Naive thymus-derived CD4-positive, alpha-beta T cell (primary cell): ENCODE measurements at regions of chr6 and their contacts with region 1.

Region 1: DNA sequence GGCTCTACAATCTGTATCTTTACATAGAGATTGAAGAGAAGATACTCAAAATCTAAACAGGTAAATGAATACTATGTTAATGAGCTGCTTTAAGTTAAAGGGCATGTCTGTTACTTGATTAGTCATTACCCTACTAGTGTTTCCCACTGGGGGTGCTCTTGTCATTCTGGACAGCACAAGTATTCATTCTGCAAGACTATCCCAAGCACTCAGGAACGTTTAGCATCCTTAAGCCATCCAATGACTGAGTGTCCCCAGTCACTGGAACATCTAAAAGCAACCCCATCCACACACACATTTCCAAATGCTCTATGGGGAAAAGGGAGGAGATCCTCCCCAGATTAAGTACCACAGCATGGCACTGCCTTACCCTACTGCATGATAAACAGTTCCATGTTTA is 25.7 kb downstream of the EZR start:
- DNase-seq: peak in 3 of 9 donors; percentile 29 to 39 (median 36)
- ATAC-seq: peak; percentile 56
- H3K4me3 ChIP-seq: no peak overlapping the region
- H3K4me3 Mint-ChIP-seq: peak overlapping the region in 1 of 10 donors; percentile 29
- H3K27ac ChIP-seq: no peak overlapping the region
- H3K27ac Mint-ChIP-seq: peak overlapping the region in 5 of 9 donors; percentile 25 to 82 (median 79)
- H3K4me1 ChIP-seq: peaks cover 19 to 77% of the 10 kb centered on the region in 2 donors
- H3K4me1 Mint-ChIP-seq: peaks cover 47 to 87% (median 80%) of the 10 kb centered on the region in 7 donors
- H3K27me3 ChIP-seq: no peaks in the 10 kb centered on the region
- H3K27me3 Mint-ChIP-seq: no peaks in the 10 kb centered on the region

Region 2: GRCh38 chr6:158303210-158303731 is 490.2 kb before region 1 on chr6:
- CTCF ChIA-PET with region 1: no interaction called
- POLR2A ChIA-PET with region 1: no interaction called
- intact Hi-C with region 1: no loop called
- DNase-seq: no peak
- ATAC-seq: no peak
- H3K4me3 ChIP-seq: no peak overlapping the region
- H3K4me3 Mint-ChIP-seq: no peak overlapping the region
- H3K27ac ChIP-seq: no peak overlapping the region
- H3K27ac Mint-ChIP-seq: no peak overlapping the region
- H3K4me1 ChIP-seq: no peaks in the 10 kb centered on the region
- H3K4me1 Mint-ChIP-seq: peaks cover 0 to 5% (median 0%) of the 10 kb centered on the region in 7 donors
- H3K27me3 ChIP-seq: no peaks in the 10 kb centered on the region
- H3K27me3 Mint-ChIP-seq: no peaks in the 10 kb centered on the region

Region 3: DNA sequence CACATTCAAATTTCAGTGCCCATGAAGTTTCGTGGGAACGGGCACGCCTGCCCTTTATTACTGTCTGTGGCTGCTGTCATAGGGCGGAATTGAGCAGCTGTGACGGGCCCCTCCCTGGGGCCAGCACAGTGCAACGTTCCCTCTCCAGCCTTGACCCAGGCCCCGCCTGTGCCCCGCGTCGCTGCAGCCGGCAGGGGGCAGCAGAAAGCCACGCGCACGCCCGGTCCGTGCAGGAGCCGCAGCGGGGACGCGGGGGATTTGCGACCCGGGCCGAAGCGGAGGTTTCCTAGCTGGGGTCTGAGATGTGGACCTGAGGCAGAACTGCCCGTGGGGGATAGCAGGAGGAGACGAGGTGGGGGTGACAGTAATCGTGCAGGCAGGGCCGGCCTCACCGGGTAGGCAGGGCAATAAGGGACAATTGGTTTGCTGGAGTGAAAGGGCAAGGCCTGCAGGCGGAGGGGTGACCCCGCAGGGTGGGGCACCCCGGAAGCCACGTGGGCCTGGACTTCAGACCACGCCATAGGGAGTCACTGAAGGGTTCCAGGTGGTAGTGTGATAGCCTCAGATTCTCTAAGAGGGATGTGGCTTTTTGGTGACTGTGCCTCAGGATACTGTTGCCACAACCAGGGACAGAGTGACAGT is 89.1 kb before region 1 on chr6:
- CTCF ChIA-PET with region 1: interaction called, 3 read pairs
- POLR2A ChIA-PET with region 1: no interaction called
- intact Hi-C with region 1: loop called (anchors 1 kb)
- DNase-seq: peak; percentile 55 to 85 (median 74)
- ATAC-seq: peak; percentile 98
- H3K4me3 ChIP-seq: peak overlapping the region; percentile 60
- H3K4me3 Mint-ChIP-seq: peak overlapping the region; percentile 73 to 90 (median 84)
- H3K27ac ChIP-seq: peak overlapping the region; percentile 35
- H3K27ac Mint-ChIP-seq: peak overlapping the region in 8 of 9 donors; percentile 14 to 84 (median 64)
- H3K4me1 ChIP-seq: peaks cover 8 to 9% of the 10 kb centered on the region in 2 donors
- H3K4me1 Mint-ChIP-seq: peaks cover 7 to 27% (median 15%) of the 10 kb centered on the region in 7 donors
- H3K27me3 ChIP-seq: no peaks in the 10 kb centered on the region
- H3K27me3 Mint-ChIP-seq: no peaks in the 10 kb centered on the region

Region 4: DNA sequence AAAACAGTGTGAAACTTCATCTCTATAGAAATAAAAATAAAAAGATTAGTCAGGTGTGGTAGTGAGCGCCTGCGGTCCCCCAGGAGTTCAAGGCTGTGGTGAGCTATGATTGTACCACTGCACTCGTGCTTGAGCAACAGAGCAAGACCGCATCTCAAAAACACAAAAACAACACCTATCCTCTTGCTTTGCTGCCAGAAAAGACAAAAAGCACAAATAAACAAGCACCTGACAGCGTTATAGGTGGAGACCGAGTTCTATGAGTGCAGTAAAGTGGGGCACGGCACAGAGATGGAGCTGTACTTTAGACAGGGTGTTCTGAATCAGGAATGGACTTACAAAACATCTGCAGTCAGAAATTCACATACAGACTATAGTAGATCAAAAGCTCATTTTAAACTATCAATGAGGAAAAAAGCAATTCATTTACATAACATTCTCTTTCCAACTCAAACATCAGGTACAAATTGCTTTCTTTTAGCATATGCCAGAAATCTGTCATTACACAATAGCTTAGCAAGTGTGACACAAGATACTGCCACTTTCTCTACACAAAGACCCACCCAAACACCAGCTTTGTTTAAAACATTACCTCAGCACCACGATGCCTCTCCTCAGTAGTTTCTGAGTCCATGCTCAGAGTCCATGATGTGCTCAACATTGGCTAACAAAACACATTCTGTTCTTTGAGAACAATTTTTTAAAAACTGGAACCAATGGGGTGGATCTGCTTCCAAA is 15.7 kb after region 1 on chr6:
- CTCF ChIA-PET with region 1: interaction called, 10 read pairs
- POLR2A ChIA-PET with region 1: interaction called, 10 read pairs
- intact Hi-C with region 1: loop called in 1 of 2 experiments (anchors 1 kb)
- DNase-seq: peak in 2 of 9 donors; percentile 35
- ATAC-seq: peak; percentile 31
- H3K4me3 ChIP-seq: no peak overlapping the region
- H3K4me3 Mint-ChIP-seq: peak overlapping the region in 9 of 10 donors; percentile 9 to 53 (median 35)
- H3K27ac ChIP-seq: no peak overlapping the region
- H3K27ac Mint-ChIP-seq: peak overlapping the region in 6 of 9 donors; percentile 50 to 79 (median 72)
- H3K4me1 ChIP-seq: peaks cover 78 to 94% of the 10 kb centered on the region in 2 donors
- H3K4me1 Mint-ChIP-seq: peaks cover 63 to 100% (median 97%) of the 10 kb centered on the region in 7 donors
- H3K27me3 ChIP-seq: no peaks in the 10 kb centered on the region
- H3K27me3 Mint-ChIP-seq: no peaks in the 10 kb centered on the region

Region 5: DNA sequence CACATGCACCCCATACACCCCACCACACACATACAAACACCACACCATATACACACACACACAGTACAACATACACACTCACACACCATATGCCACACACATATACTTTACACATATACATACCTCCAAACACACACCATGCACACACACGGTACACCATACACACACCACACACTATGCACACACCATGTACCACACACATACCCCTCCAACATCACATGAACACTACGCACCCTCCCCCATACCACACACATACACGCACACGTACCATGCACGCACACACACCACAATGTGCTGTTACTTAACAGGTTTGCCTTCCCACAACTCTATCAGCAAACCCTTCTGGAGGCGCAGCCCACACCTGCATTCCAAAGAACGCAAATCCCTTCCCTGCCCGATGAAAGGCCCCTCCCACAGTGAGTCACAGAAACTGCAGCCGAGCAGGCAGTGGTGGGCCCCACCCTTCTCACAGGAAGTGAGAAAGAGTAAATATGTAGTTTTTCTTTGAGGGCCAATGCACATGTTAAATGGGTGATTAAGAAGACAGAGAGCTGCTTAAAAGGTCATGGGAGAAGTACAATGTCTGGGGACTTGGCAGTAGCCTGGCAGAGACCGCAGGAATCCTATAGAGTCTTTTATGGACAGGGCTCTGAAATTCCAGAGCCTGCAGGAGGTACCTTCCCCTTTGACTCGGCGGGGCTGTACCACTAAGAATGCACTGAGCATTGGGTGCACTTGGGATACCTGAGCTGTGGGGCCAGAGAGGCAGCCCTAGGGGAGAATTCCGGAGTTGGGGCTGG is 59.8 kb after region 1 on chr6:
- CTCF ChIA-PET with region 1: interaction called, 3 read pairs
- POLR2A ChIA-PET with region 1: interaction called, 11 read pairs
- intact Hi-C with region 1: loop called in 1 of 2 experiments (anchors 1 kb)
- DNase-seq: peak; percentile 54 to 93 (median 86)
- ATAC-seq: peak; percentile 79
- H3K4me3 ChIP-seq: peak overlapping the region; percentile 55
- H3K4me3 Mint-ChIP-seq: no peak overlapping the region
- H3K27ac ChIP-seq: peak overlapping the region; percentile 83
- H3K27ac Mint-ChIP-seq: no peak overlapping the region
- H3K4me1 ChIP-seq: peaks cover 47 to 55% of the 10 kb centered on the region in 2 donors
- H3K4me1 Mint-ChIP-seq: peaks cover 16 to 42% (median 33%) of the 10 kb centered on the region in 7 donors
- H3K27me3 ChIP-seq: no peaks in the 10 kb centered on the region
- H3K27me3 Mint-ChIP-seq: no peaks in the 10 kb centered on the region

Region 6: DNA sequence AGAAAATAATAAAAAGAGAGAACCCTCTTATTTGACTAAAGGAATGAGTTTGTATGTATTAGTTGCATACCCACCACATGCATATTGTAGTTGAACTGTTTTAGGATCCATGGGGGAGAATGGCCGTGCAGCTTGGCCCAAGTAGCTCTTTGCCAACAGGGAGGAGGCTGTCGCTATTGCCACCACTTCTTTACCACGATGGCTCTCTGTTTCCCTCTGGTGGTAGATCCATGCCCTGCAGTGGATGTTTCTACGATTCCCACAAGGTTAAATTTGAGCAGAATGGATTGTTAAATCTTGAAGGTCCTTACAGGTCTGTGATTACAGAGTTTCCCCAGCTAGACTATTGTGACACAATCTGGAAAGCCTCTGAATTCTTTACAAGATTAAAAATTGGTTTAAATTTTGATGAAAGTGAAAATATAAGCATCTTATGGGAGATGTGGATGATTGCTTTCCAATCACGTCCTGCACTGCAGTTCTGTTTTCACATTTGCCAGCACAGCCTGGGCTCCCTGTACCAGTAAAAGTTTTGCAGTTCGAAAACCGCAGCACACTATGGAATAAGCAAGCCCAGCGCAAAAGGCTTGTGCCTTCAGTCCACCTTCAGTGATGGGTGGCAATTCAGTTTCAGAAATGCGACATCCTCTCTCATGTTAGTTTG is 341.4 kb after region 1 on chr6:
- CTCF ChIA-PET with region 1: no interaction called
- POLR2A ChIA-PET with region 1: no interaction called
- intact Hi-C with region 1: loop called in 1 of 2 experiments (anchors 10 kb)
- DNase-seq: peak; percentile 46 to 77 (median 68)
- ATAC-seq: peak; percentile 96
- H3K4me3 ChIP-seq: no peak overlapping the region
- H3K4me3 Mint-ChIP-seq: no peak overlapping the region
- H3K27ac ChIP-seq: no peak overlapping the region
- H3K27ac Mint-ChIP-seq: no peak overlapping the region
- H3K4me1 ChIP-seq: no peaks in the 10 kb centered on the region
- H3K4me1 Mint-ChIP-seq: peaks cover 0 to 9% (median 0%) of the 10 kb centered on the region in 7 donors
- H3K27me3 ChIP-seq: no peaks in the 10 kb centered on the region
- H3K27me3 Mint-ChIP-seq: peaks cover 0 to 42% (median 7%) of the 10 kb centered on the region in 5 donors